Calu3 (cell line): ENCODE measurements at regions of chr12 and their contacts with region 1.

Region 1: DNA sequence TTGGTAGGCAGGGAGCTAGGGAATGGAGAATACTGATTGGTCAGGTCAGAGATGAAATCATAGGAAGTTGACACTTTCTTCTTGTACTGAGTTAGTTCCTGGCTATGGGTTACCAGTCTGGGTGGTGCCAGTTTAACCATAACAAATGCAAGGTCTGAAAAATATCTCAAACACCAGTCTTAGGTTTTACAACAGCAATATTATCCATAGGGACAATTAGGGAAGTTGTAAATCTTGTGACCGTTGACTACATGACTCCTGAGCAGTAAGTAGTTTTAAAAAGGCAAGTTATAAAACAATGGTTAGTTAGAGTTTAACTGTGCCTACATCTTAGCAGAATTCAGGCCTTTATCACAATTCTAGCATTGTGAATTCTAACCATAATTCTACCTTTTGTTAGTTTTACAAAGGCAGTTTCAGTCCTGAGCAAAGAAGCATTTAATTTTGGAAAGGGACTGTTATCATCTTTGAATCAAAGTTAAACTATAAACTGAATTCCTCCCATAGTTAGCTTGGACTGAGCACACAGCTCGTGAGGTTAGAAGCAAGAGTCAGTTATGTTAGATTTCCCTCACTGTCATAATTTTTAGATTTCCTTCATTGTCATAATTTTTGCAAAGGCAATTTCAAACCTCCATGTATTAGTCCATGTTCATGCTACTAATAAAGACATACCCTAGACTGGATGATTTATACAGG is 19.7 kb upstream of the MON2 start:
- DNase-seq: no peak
- H3K4me3 Mint-ChIP-seq: no peak overlapping the region
- H3K27ac Mint-ChIP-seq: no peak overlapping the region
- H3K4me1 Mint-ChIP-seq: no peaks in the 10 kb centered on the region
- H3K27me3 Mint-ChIP-seq: peaks cover 15% of the 10 kb centered on the region
- CTCF ChIP-seq: no peak

Region 2: DNA sequence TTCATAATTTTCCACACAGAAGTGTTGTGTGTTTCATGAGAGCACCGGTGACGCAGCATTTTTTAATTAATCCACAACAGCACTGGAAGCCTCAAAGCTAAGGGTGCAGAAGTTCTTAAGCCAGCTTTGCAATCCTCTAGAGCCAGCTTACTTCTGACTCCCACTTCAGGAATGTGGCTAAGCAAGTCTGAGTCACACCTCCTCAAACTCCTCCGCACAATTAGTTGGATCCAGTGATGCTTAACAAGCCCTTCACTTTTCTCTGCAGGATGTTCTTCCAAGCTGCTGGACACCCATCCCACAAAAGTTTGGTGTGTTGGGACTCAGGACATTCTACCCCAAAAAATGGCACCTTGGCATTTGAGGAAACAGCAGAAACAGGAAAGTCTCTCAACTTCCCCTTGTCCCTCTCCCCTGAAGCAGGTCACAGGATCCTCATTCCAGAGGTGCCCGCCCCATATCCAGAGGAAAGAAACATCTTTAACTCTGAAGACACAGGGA is 278.1 kb after region 1 on chr12:
- CTCF ChIA-PET with region 1: no interaction called
- intact Hi-C with region 1: loop called (anchors 5 kb)
- DNase-seq: peak; percentile 88
- H3K4me3 Mint-ChIP-seq: peak overlapping the region; percentile 44
- H3K27ac Mint-ChIP-seq: peak overlapping the region; percentile 81
- H3K4me1 Mint-ChIP-seq: peaks cover 68% of the 10 kb centered on the region
- H3K27me3 Mint-ChIP-seq: no peaks in the 10 kb centered on the region
- CTCF ChIP-seq: no peak